Endothelial cell of umbilical vein (primary cell): ENCODE measurements at regions of chr9 and their contacts with region 1.

Region 1: GRCh38 chr9:124320062-124320973 is 62.6 kb downstream of the NEK6 start:
- DNase-seq: peak; percentile 45
- H3K4me3 ChIP-seq: no peak overlapping the region
- H3K27ac ChIP-seq: no peak overlapping the region
- H3K4me1 ChIP-seq: peaks cover 9% of the 10 kb centered on the region
- H3K27me3 ChIP-seq: no peaks in the 10 kb centered on the region
- CTCF ChIP-seq: peak; percentile 91 to 92
- POLR2A ChIP-seq: no peak

Region 2: GRCh38 chr9:123401879-123402513 is 918.3 kb before region 1 on chr9:
- CTCF ChIA-PET with region 1: no interaction called
- POLR2A ChIA-PET with region 1: no interaction called
- dilution Hi-C with region 1: no loop called
- intact Hi-C with region 1: loop called (anchors 10 kb)
- DNase-seq: peak; percentile 64
- H3K4me3 ChIP-seq: no peak overlapping the region
- H3K27ac ChIP-seq: no peak overlapping the region
- H3K4me1 ChIP-seq: no peaks in the 10 kb centered on the region
- H3K27me3 ChIP-seq: no peaks in the 10 kb centered on the region
- CTCF ChIP-seq: peak; percentile 75 to 78
- POLR2A ChIP-seq: no peak

Region 3: GRCh38 chr9:124133727-124134126 is 186.6 kb before region 1 on chr9:
- CTCF ChIA-PET with region 1: interaction called, 41 read pairs
- POLR2A ChIA-PET with region 1: no interaction called
- dilution Hi-C with region 1: no loop called
- intact Hi-C with region 1: no loop called
- DNase-seq: peak; percentile 68
- H3K4me3 ChIP-seq: no peak overlapping the region
- H3K27ac ChIP-seq: no peak overlapping the region
- H3K4me1 ChIP-seq: peaks cover 7% of the 10 kb centered on the region
- H3K27me3 ChIP-seq: no peaks in the 10 kb centered on the region
- CTCF ChIP-seq: peak; percentile 36 to 64
- POLR2A ChIP-seq: no peak

Region 4: GRCh38 chr9:124218438-124218982 is 101.8 kb before region 1 on chr9:
- CTCF ChIA-PET with region 1: interaction called, 3 read pairs
- POLR2A ChIA-PET with region 1: no interaction called
- dilution Hi-C with region 1: loop called (anchors 25 kb)
- intact Hi-C with region 1: no loop called
- DNase-seq: peak; percentile 68
- H3K4me3 ChIP-seq: no peak overlapping the region
- H3K27ac ChIP-seq: peak overlapping the region; percentile 42
- H3K4me1 ChIP-seq: peaks cover 53% of the 10 kb centered on the region
- H3K27me3 ChIP-seq: no peaks in the 10 kb centered on the region
- CTCF ChIP-seq: peak in 1 of 2 donors; percentile 20
- POLR2A ChIP-seq: no peak

Region 5: DNA sequence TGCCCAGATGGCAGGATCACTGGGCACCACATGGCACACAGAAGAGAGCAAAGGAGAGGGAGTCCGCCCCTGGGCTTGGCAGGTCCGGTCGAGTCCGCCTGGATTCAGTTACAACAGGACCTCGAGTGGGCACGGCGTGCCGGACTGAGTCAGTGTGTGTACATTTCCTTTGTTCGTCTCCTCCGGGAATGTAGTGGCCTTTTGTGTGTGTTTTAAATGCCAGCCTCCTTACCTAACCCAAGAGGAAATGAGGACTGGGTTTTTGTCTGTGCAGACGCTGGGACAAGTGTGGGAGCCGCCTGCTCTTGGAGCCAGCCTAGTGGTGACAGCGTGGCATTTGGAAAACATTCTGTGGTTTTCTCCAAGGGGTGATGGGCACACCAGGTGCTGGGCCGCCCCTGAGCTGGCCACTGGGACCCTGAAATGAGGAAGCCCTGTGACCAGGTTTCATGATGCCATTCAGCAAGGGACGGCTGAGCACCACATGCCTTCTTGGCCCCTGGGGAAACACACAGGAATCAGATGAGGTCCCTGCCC is 53.0 kb before region 1 on chr9:
- CTCF ChIA-PET with region 1: interaction called, 4 read pairs
- POLR2A ChIA-PET with region 1: no interaction called
- dilution Hi-C with region 1: no loop called
- intact Hi-C with region 1: loop called (anchors 2 kb)
- DNase-seq: peak; percentile 89
- H3K4me3 ChIP-seq: no peak overlapping the region
- H3K27ac ChIP-seq: peak overlapping the region; percentile 87
- H3K4me1 ChIP-seq: peaks cover 72% of the 10 kb centered on the region
- H3K27me3 ChIP-seq: no peaks in the 10 kb centered on the region
- CTCF ChIP-seq: peak in 1 of 2 donors; percentile 15
- POLR2A ChIP-seq: peak; percentile 79